Calu3 (cell line): ENCODE measurements at regions of chr10 and their contacts with region 1.

Region 1: DNA sequence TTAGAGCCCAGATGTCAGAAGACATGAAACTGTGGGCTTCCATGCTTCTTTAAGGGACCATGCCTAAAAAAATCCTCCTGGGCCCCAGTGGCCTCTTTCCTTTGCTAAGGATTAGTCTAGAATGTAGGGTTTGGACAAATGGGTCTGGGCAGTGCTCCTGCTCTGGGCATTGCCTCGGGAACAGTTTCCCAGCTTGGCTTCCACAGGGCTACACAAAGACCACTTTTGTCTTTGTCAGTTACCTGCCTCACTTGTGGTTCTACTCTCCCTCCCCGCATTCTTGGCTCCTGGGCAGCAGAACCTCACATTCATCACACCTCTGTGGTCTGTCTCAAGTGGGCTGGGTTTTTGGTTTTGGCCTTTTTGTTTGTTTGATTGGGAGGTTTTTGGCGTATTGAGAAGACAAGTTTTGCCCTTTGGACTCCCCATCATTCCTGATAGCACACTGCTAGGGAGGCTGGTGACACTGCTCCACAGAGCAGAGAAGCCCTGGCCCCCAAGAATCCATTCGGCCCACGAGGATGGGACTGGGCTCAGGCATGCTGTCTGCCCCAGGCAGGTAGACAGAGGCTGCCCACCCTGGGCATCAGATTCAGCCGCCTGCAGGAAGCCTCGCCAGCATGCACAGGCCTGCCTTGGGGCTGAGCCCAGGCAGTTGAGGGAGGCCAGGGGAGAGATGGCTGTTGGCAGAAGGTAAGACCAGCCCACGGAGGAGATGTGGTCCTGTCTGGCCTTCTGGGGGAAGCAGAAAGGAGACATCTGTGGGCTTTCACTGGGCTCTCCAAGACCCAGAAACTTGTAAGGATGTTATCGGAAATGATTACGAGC is 343.7 kb downstream of the WDR11 start:
- DNase-seq: no peak
- H3K4me3 Mint-ChIP-seq: no peak overlapping the region
- H3K27ac Mint-ChIP-seq: no peak overlapping the region
- H3K4me1 Mint-ChIP-seq: no peaks in the 10 kb centered on the region
- H3K27me3 Mint-ChIP-seq: no peaks in the 10 kb centered on the region
- CTCF ChIP-seq: no peak

Region 2: GRCh38 chr10:120770496-120770895 is 424.4 kb before region 1 on chr10:
- CTCF ChIA-PET with region 1: no interaction called
- intact Hi-C with region 1: no loop called
- DNase-seq: no peak
- H3K4me3 Mint-ChIP-seq: no peak overlapping the region
- H3K27ac Mint-ChIP-seq: no peak overlapping the region
- H3K4me1 Mint-ChIP-seq: no peaks in the 10 kb centered on the region
- H3K27me3 Mint-ChIP-seq: peaks cover 54% of the 10 kb centered on the region
- CTCF ChIP-seq: no peak

Region 3: DNA sequence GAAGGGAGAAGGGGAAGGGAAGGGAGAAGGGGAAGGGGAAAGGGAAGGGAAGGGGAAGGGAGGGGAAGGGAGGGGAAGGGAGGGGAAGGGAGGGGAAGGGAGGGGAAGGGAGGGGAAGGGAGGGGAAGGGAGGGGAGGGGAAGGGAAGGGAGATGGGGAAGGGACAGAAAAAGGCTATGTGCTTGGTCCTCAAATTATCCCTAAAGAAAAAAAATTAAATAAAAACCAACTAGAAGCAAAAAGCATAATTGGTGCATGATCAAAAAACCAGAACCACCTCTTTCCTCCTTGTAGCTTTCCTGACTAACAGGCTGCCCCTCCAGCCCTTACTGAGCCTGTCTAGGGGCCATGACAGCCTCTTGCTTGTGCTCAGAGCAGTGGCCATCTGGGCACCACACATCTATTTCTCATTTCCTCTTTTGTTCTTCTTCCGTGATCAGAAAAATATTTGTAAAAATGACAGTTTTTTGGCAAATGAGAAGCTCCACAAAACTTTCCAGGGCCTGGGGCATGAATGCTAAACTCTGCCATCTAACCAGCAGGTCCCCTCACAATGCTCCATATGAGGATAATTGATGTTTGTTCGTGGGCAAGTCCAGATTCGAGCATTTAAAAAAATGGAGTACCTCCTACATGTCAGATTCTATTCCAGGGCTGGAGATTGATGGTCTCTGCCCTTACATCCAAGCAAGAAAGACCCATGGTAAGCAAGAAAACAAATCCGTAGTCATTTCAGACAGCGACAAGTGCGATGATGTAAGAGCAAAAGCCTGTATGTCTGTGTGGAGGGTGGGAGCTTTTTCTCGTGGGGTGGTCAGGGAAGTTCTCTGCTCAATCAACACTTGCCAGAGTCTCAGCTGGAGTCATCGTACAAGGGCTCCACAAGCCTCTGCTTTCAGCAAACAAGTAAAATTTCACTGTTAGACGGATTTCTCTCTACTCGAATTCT is 22.8 kb before region 1 on chr10:
- CTCF ChIA-PET with region 1: no interaction called
- intact Hi-C with region 1: no loop called
- DNase-seq: no peak
- H3K4me3 Mint-ChIP-seq: no peak overlapping the region
- H3K27ac Mint-ChIP-seq: no peak overlapping the region
- H3K4me1 Mint-ChIP-seq: peaks cover 30% of the 10 kb centered on the region
- H3K27me3 Mint-ChIP-seq: no peaks in the 10 kb centered on the region
- CTCF ChIP-seq: no peak

Region 4: GRCh38 chr10:121240011-121240410 is 45.1 kb after region 1 on chr10:
- CTCF ChIA-PET with region 1: no interaction called
- intact Hi-C with region 1: loop called (anchors 1 kb)
- DNase-seq: peak; percentile 40
- H3K4me3 Mint-ChIP-seq: peak overlapping the region; percentile 45
- H3K27ac Mint-ChIP-seq: peak overlapping the region; percentile 63
- H3K4me1 Mint-ChIP-seq: peaks cover 22% of the 10 kb centered on the region
- H3K27me3 Mint-ChIP-seq: no peaks in the 10 kb centered on the region
- CTCF ChIP-seq: no peak

Region 5: GRCh38 chr10:121260376-121260775 is 65.5 kb after region 1 on chr10:
- CTCF ChIA-PET with region 1: no interaction called
- intact Hi-C with region 1: no loop called
- DNase-seq: no peak
- H3K4me3 Mint-ChIP-seq: no peak overlapping the region
- H3K27ac Mint-ChIP-seq: peak overlapping the region; percentile 21
- H3K4me1 Mint-ChIP-seq: peaks cover 11% of the 10 kb centered on the region
- H3K27me3 Mint-ChIP-seq: no peaks in the 10 kb centered on the region
- CTCF ChIP-seq: no peak

Region 6: DNA sequence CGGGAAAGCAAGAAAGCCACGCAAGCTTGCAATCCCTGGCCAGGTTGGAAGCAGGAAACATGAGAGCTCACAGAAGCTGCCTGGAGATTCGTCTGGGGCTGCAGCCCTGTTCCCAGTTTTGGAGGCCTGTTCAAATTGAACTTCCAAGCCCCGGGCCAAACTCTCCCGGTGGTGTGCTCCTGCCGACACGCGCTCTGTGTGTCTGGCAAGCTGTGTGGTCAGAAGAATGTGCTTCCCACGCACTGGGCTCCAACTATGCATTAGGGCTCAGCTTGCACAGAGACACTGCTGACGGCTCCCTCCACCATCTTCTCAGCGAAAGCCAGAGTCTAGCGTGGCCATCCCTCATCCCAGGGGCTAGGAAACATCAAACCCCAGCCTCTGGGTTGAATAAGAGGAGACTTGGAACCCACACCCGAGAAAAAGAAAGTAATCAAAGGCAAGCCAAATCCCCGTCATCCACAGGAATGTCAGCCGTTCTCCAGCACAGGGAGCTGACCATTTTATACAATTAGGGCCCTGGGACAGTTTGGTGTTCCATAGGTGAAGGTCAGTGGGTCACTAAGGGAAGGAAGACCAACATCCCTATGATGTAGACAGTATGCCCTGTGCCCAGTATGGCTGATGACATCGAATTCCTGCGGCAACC is 296.1 kb after region 1 on chr10:
- CTCF ChIA-PET with region 1: no interaction called
- intact Hi-C with region 1: no loop called
- DNase-seq: no peak
- H3K4me3 Mint-ChIP-seq: no peak overlapping the region
- H3K27ac Mint-ChIP-seq: no peak overlapping the region
- H3K4me1 Mint-ChIP-seq: peaks cover 8% of the 10 kb centered on the region
- H3K27me3 Mint-ChIP-seq: no peaks in the 10 kb centered on the region
- CTCF ChIP-seq: no peak